ENCODE measurements at regions of chr6 and their contacts with region 1.

Region 1: DNA sequence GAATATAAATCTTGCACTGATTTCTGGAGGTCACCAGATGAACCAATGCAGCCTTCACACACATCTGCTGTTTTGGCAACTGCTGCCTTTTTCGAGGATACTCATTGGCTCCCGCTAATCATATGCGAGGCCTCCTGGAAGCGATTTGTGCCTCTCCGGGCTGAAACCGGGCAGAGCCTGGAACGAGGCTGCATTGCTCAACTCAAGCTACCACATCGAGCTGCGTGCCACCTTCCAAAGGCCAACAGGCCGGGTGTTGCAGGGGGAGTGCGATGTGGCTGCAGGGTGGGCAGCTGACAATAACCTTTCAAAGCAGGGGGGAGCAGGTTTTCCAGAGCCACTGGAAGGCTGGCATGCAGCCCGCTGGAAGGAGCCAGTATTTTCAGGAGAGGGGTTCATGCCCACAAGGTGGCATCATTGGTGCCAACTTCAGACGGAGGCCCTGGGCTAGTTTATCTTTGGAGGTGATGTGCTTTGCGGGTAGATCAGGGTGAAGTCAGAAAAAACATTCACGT is 122.6 kb upstream of the IFNGR1 start:
- DNase-seq: no peak
- H3K4me3 ChIP-seq: no peak overlapping the region
- H3K4me3 Mint-ChIP-seq: no peak overlapping the region
- H3K27ac Mint-ChIP-seq: no peak overlapping the region
- H3K4me1 ChIP-seq: peaks cover 5% of the 10 kb centered on the region
- H3K4me1 Mint-ChIP-seq: no peaks in the 10 kb centered on the region
- H3K27me3 ChIP-seq: no peaks in the 10 kb centered on the region
- H3K27me3 Mint-ChIP-seq: no peaks in the 10 kb centered on the region
- CTCF ChIP-seq: no peak

Region 2: GRCh38 chr6:137307163-137307854 is 34.4 kb before region 1 on chr6:
- CTCF ChIA-PET with region 1: no interaction called
- POLR2A ChIA-PET with region 1: no interaction called
- intact Hi-C with region 1: loop called (anchors 1 kb)
- DNase-seq: no peak
- H3K4me3 ChIP-seq: no peak overlapping the region
- H3K4me3 Mint-ChIP-seq: no peak overlapping the region
- H3K27ac Mint-ChIP-seq: no peak overlapping the region
- H3K4me1 ChIP-seq: no peaks in the 10 kb centered on the region
- H3K4me1 Mint-ChIP-seq: no peaks in the 10 kb centered on the region
- H3K27me3 ChIP-seq: no peaks in the 10 kb centered on the region
- H3K27me3 Mint-ChIP-seq: no peaks in the 10 kb centered on the region
- CTCF ChIP-seq: no peak

Region 3: DNA sequence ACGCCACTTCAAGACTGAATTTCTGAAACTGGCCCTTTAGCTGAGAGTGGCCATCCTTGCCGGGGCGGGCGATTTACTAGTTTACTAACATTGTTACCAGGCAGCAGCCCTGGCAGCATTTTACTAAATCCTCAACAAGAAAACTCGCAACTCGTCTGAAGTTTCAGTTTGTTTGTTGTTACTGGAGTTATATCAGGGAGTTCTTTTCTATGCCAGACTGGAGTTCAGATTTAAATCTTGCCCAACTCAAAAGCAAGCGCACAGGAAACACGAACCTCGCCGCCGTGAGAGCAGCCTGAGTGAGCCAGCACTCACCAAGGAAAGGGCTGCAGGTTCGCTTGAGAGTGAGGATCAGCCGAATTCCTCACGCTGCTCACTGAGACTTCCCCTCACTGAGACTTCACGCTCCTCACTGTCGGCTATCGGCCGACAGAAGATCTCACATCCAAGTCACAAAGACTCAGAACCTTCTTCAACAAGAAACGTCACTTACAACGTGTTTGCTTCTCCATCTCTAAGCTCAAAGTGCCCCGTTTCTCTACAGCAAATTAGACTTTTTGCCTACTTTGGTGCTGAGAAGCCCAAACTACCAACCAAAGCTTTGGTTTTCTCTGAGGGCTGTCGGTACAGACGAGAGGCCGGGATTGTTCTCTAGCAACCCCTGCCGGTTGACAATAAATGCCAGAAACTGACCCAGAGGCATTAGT is 73.5 kb after region 1 on chr6:
- CTCF ChIA-PET with region 1: no interaction called
- POLR2A ChIA-PET with region 1: no interaction called
- intact Hi-C with region 1: loop called (anchors 5 kb)
- DNase-seq: peak; percentile 39 to 57
- H3K4me3 ChIP-seq: peak overlapping the region; percentile 2; the same call in 1 of the 2 replicates
- H3K4me3 Mint-ChIP-seq: peak overlapping the region; percentile 70
- H3K27ac Mint-ChIP-seq: no peak overlapping the region
- H3K4me1 ChIP-seq: no peaks in the 10 kb centered on the region
- H3K4me1 Mint-ChIP-seq: no peaks in the 10 kb centered on the region
- H3K27me3 ChIP-seq: no peaks in the 10 kb centered on the region
- H3K27me3 Mint-ChIP-seq: no peaks in the 10 kb centered on the region
- CTCF ChIP-seq: peak in 1 of 2 experiments; percentile 43